ENCODE measurements at regions of chr20 and their contacts with region 1.

Region 1: DNA sequence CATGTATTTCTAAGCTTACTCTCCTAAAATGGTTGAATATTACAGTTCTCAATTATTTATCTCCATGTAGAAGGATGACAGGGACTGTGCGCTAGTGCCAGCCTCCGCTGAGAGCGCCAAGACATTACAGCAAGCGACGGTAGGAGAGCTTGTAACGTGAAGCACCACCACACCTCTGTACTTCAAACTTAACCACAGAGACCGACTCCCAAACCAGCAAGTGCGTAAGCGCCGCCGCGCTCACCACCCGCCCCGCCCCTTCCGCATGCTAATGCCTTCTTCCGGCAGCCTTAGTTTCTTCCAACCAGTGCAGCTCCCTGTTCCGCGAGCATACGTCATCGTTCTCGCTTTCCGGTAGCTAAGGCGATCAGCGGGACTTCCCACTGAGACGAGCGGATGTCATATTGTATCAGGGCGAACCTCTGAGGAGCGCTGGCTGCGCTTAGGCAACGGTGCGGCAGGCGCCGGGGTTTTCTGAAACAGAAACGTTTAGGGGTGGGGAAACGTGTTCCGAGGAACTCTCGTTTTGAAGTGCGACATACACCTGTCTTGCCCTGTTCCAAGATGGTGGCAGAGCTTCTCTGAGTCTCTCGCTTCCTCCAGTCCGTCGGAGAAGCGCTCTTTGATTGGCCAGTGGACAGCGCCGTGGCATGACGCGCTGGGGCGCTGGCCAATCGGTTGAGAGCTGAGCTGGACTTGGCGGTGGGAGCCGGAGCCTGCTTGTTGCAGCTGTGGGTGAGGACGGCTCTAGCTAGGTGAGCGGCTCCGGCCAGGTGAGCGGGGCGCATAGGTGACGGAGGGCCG is at the start of gene SEC23B:
- DNase-seq: peak; percentile 99
- ATAC-seq: peak; percentile 94
- H3K4me3 Mint-ChIP-seq: peak within 1 kb of the TSS; percentile 99
- H3K27ac Mint-ChIP-seq: peak within 1 kb of the TSS; percentile 100
- H3K4me1 Mint-ChIP-seq: peaks cover 48% of the 10 kb centered on the region
- H3K27me3 Mint-ChIP-seq: no peaks in the 10 kb centered on the region
- total RNA-seq, gene SEC23B: 95.3 to 119 TPM

Region 2: DNA sequence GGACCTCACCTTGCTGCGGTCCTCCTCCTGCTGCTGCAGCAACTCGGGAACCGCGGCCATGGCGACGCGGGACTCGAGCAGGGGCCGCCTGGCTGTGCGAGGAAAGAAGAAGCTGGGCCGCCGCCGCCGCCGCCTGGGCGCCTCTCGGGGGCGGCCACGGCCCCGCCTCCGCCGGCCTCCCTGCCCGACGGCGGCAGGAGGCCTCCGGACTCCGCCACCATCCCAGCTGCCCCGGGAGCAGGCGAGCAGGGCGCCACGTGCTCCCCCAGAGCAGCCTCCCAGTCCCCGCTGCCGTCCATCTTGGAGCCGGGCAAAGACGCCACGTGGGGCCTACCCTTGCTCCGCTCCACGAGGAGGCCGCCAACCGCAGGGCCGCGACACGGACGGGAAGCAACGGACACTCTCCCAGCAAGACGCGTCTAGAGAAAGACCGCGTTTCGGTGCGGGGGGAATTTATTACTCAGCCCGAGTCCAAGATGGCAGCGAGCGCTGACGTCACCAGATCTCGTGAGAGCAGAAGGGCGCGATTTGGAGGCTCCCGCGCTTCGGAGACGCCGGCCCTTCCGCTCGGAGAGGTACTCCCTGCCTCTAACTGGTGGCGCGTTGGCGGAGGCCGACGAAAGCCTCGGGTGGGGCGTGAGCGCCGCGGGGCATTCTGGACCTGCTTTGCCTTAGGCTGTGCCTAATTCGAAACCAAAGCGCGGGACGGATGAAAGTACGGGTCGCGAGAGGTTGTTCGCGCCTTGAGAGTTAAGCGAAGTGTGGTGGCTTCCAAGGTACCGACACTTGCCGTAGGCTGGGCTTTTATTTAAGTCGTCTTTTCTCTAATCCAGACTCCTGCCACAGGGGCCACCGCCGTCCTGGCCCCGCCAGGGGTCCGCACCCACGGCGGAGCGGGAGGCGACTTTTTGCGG is 538.8 kb before region 1 on chr20 and contains the starts of genes MGME1 and SNX5:
- CTCF ChIA-PET with region 1: no interaction called
- POLR2A ChIA-PET with region 1: interaction called, 3 read pairs
- intact Hi-C with region 1: loop called (anchors 1 to 2 kb)
- DNase-seq: peak; percentile 100
- ATAC-seq: peak; percentile 91
- H3K4me3 Mint-ChIP-seq: peak within 1 kb of the TSS; percentile 87
- H3K27ac Mint-ChIP-seq: peak within 1 kb of the TSS; percentile 99
- H3K4me1 Mint-ChIP-seq: peaks cover 49% of the 10 kb centered on the region
- H3K27me3 Mint-ChIP-seq: no peaks in the 10 kb centered on the region
- total RNA-seq, gene MGME1: 24.1 to 29.7 TPM
- total RNA-seq, gene SNX5: 204 to 227 TPM

Region 3: GRCh38 chr20:18496740-18497592 is 10.5 kb before region 1 on chr20 and contains the start of gene RBBP9:
- CTCF ChIA-PET with region 1: interaction called, 19 read pairs
- POLR2A ChIA-PET with region 1: interaction called, 28 read pairs
- intact Hi-C with region 1: loop called (anchors 1 kb)
- DNase-seq: peak; percentile 88
- ATAC-seq: peak; percentile 99
- H3K4me3 Mint-ChIP-seq: peak within 1 kb of the TSS; percentile 97
- H3K27ac Mint-ChIP-seq: peak within 1 kb of the TSS; percentile 83
- H3K4me1 Mint-ChIP-seq: peaks cover 12% of the 10 kb centered on the region
- H3K27me3 Mint-ChIP-seq: no peaks in the 10 kb centered on the region
- total RNA-seq, gene RBBP9: 19.9 to 20.6 TPM

Region 4: DNA sequence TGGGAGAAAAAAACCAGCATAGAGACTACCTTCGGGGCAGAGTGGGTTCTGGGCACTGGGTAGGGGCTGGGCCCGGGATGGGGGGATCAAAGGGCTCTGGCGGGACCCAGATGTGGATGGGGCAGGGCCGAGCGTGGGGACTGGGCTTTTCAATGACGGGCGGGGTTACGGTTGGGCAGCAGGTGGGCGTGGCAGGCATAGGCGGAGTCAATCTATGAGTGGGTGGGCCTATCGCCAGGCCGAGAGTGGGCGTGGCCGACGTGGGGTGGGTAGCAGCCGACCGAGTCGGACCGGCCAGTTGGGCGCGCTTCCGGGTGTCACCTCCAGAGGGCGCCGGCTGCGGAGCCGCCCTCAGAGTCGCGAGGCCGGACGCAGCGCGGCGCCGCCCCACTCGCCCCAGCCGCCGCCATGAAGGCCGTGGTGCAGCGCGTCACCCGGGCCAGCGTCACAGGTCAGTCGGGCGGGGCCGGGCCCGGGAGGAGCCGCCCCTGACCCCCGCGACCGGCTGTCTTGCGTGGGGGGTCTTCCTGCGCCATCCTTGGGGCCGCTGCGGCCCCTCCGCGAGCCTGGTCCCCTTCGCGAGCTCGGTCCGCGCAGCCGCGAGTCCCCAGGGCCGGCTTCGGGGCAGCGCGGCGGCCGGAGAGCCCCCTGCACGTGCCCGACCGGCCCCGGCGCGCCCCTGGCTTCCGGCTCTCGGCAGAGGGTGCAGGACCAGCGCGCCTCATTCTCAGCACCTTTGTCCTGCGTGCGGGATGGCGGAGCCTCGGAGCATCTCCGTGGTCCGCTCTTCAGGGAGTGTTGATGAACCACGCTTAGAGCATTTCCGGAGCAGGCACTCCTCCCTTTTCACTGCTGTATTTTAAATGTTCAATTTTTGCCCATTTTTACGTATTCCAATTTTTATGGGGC is 80.5 kb after region 1 on chr20 and contains the start of gene DTD1:
- CTCF ChIA-PET with region 1: no interaction called
- POLR2A ChIA-PET with region 1: no interaction called
- intact Hi-C with region 1: loop called (anchors 1 kb)
- DNase-seq: peak; percentile 96
- ATAC-seq: peak; percentile 92
- H3K4me3 Mint-ChIP-seq: peak within 1 kb of the TSS; percentile 89
- H3K27ac Mint-ChIP-seq: peak within 1 kb of the TSS; percentile 82
- H3K4me1 Mint-ChIP-seq: peaks cover 25% of the 10 kb centered on the region
- H3K27me3 Mint-ChIP-seq: peaks cover 6% of the 10 kb centered on the region
- total RNA-seq, gene DTD1: 40.7 to 54.6 TPM

Region 5: GRCh38 chr20:20017001-20017843 is 1509.8 kb after region 1 on chr20 and contains the start of gene NAA20:
- CTCF ChIA-PET with region 1: no interaction called
- POLR2A ChIA-PET with region 1: no interaction called
- intact Hi-C with region 1: loop called (anchors 1 to 5 kb)
- DNase-seq: peak; percentile 96
- ATAC-seq: peak; percentile 98
- H3K4me3 Mint-ChIP-seq: peak within 1 kb of the TSS; percentile 93
- H3K27ac Mint-ChIP-seq: peak within 1 kb of the TSS; percentile 88
- H3K4me1 Mint-ChIP-seq: peaks cover 54% of the 10 kb centered on the region
- H3K27me3 Mint-ChIP-seq: no peaks in the 10 kb centered on the region
- total RNA-seq, gene NAA20: 58.6 to 88.7 TPM

Measured in activated CD4-positive, alpha-beta T cell treated with anti-CD3 and anti-CD28 coated beads for 36 hours (primary cell).